ENCODE measurements at regions of chr12 and their contacts with region 1.

Region 1: DNA sequence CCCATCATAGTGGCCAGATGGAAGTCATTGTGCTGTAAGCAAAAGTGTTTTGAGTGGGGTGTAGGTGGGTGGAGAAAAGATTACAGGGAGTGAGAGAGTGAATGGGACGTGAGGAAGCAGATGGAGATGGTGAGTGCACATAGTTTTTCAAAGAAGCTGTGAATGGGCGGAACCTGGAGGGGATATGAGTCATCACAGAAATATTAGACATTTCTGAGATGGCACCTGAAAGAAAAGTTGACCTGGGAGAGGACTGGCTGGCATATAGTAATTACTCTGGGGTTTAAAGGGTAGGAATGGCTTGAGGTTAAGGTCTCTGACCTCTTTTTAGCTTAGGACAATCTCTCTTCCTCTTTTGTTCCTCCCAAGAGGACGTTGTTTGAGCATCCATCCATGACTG is 50.5 kb downstream of the ANO4 start:
- DNase-seq: no peak
- H3K4me3 ChIP-seq: no peak overlapping the region
- H3K27ac ChIP-seq: no peak overlapping the region
- H3K4me1 ChIP-seq: no peaks in the 10 kb centered on the region
- H3K27me3 ChIP-seq: no peaks in the 10 kb centered on the region
- CTCF ChIP-seq: no peak
- EP300 ChIP-seq: no peak
- POLR2A ChIP-seq: no peak

Region 2: GRCh38 chr12:100767950-100768349 is 77.1 kb before region 1 on chr12:
- intact Hi-C with region 1: no loop called
- DNase-seq: peak; percentile 61
- H3K4me3 ChIP-seq: no peak overlapping the region
- H3K27ac ChIP-seq: no peak overlapping the region
- H3K4me1 ChIP-seq: no peaks in the 10 kb centered on the region
- H3K27me3 ChIP-seq: no peaks in the 10 kb centered on the region
- CTCF ChIP-seq: no peak
- EP300 ChIP-seq: no peak
- POLR2A ChIP-seq: no peak

Region 3: GRCh38 chr12:100857971-100858370 is 12.9 kb after region 1 on chr12:
- intact Hi-C with region 1: no loop called
- DNase-seq: no peak
- H3K4me3 ChIP-seq: no peak overlapping the region
- H3K27ac ChIP-seq: no peak overlapping the region
- H3K4me1 ChIP-seq: no peaks in the 10 kb centered on the region
- H3K27me3 ChIP-seq: no peaks in the 10 kb centered on the region
- CTCF ChIP-seq: no peak
- EP300 ChIP-seq: no peak
- POLR2A ChIP-seq: no peak

Region 4: DNA sequence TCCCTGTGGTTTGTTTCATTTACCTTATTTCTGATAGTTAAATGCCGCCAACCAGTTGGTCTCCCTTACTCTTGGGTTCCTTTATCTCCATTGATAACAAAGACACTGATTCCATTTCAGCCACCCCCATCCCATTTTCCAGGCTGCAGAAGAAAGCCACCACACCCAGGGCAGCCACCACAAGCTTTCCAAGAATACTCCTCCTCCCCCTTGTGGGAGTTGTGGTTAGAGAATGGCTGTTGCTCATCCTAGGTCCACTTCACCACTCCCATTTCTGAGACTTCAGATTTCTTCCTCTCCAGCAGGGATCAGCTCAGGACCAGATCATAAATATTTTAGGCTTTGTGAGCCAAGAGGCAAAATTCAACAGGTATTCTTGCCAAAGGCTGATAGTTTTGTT is 23.4 kb after region 1 on chr12:
- intact Hi-C with region 1: loop called (anchors 1 kb)
- DNase-seq: no peak
- H3K4me3 ChIP-seq: no peak overlapping the region
- H3K27ac ChIP-seq: no peak overlapping the region
- H3K4me1 ChIP-seq: no peaks in the 10 kb centered on the region
- H3K27me3 ChIP-seq: no peaks in the 10 kb centered on the region
- CTCF ChIP-seq: no peak
- EP300 ChIP-seq: no peak
- POLR2A ChIP-seq: no peak

Region 5: GRCh38 chr12:100883237-100883636 is 38.1 kb after region 1 on chr12:
- intact Hi-C with region 1: no loop called
- DNase-seq: no peak
- H3K4me3 ChIP-seq: no peak overlapping the region
- H3K27ac ChIP-seq: no peak overlapping the region
- H3K4me1 ChIP-seq: no peaks in the 10 kb centered on the region
- H3K27me3 ChIP-seq: no peaks in the 10 kb centered on the region
- CTCF ChIP-seq: no peak
- EP300 ChIP-seq: no peak
- POLR2A ChIP-seq: no peak

Measured in sigmoid colon (tissue), 7 donors.